Uterus (tissue), 4 donors: ENCODE measurements at regions of chr6 and their contacts with region 1.

Region 1: DNA sequence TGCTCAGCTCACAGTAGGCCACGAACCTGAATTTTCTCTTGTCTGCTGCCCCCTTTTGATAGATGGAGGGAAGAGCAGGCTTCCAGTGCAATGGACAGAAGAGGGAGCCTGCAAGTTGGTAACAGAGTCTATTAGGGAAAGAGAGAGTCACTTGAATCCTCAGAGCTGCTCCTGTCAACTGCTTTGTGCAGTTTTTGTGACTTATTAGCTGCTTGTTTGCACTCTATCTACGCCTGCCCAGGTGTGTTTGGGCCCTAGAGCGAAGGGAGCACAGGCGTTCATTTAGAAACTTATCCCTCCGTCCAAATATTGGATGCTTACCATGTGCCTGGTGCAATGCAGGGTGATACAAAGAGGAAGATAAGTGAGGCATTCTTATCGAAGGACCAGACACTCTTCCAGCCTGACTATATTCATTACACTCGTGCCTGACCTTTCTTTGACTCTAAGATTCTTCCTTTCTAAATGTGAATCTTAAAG is 11.6 kb upstream of the SLC2A12 start:
- DNase-seq: peak; percentile 66 to 75
- H3K4me3 ChIP-seq: no peak overlapping the region
- H3K27ac ChIP-seq: peak overlapping the region in 1 of 2 donors; percentile 50
- H3K4me1 ChIP-seq: peaks cover 0 to 4% of the 10 kb centered on the region in 2 donors
- H3K27me3 ChIP-seq: no peaks in the 10 kb centered on the region
- CTCF ChIP-seq: peak; percentile 77 to 88 (median 86)
- POLR2A ChIP-seq: no peak

Region 2: DNA sequence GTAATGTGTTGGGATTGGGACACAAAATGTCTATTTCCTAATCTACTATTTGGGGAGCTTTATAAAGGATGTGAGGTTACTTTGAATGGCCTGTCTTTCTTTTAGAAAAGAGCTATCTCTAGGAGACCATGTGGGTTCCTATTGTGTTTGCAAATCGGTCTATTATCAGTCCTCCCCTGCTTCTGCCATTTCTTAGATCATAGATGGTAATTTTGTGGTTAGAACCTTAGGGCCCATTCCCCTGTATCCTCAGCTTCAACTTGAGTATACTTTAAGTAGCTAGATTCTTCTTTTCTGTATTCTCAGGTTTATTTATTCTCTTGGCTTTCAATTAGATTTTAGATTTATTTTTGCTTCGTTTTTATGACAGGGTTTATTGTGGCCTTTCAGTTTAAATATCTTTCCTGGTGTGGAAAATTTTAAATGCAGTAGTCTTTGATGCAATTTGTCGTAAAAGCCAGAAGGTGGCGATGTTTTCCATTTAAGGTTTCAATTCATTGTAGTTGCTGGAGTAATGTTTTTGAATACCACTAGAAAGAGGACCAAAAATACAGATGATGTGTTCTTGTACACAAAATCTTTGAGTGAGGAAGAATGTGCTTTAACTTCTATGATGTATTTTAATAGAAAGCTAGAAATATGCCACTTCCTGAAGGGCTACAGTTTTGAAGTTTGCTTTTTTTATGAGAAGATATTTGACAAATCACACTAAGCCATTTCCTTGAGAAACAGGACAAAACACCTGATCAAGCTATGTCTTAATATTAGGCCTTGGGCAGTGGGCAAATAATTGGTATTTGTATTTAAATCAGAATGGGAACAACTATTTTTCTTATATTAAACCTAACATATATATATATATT is 90.7 kb before region 1 on chr6:
- intact Hi-C with region 1: loop called (anchors 10 kb)
- DNase-seq: no peak
- H3K4me3 ChIP-seq: no peak overlapping the region
- H3K27ac ChIP-seq: peak overlapping the region; percentile 48 to 54
- H3K4me1 ChIP-seq: no peaks in the 10 kb centered on the region
- H3K27me3 ChIP-seq: no peaks in the 10 kb centered on the region
- CTCF ChIP-seq: peak; percentile 72 to 85 (median 74)
- POLR2A ChIP-seq: no peak

Region 3: GRCh38 chr6:134145786-134146185 is 81.8 kb after region 1 on chr6:
- intact Hi-C with region 1: no loop called
- DNase-seq: no peak
- H3K4me3 ChIP-seq: no peak overlapping the region
- H3K27ac ChIP-seq: no peak overlapping the region
- H3K4me1 ChIP-seq: no peaks in the 10 kb centered on the region
- H3K27me3 ChIP-seq: no peaks in the 10 kb centered on the region
- CTCF ChIP-seq: no peak
- POLR2A ChIP-seq: no peak